ENCODE measurements at regions of chr2 and their contacts with region 1.

Region 1: DNA sequence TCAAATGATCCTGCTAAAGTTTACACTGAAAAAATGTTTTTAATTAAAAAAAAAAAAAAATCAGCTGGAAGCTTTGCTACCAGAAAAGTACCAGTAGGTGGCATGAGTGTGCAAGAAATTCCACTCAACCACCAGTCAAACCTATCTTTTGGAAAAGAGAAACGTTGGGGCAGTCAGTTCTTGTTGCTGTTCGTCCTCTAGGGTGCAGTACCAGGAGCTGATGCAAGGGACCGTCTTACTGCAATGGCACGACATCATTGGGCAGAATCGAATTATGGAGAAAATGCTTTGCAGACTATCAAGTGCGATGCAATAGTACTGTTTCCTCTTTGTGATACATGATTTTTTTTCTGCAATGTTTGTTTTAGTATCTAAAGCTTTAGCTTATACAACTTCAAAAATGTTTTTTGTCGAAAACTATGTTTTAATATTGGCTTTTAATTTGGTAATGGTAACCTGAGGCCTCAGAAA is 18.3 kb downstream of the YPEL5 start:
- DNase-seq: peak; percentile 76
- H3K4me3 ChIP-seq: no peak overlapping the region
- CTCF ChIP-seq: peak; percentile 76

Region 2: DNA sequence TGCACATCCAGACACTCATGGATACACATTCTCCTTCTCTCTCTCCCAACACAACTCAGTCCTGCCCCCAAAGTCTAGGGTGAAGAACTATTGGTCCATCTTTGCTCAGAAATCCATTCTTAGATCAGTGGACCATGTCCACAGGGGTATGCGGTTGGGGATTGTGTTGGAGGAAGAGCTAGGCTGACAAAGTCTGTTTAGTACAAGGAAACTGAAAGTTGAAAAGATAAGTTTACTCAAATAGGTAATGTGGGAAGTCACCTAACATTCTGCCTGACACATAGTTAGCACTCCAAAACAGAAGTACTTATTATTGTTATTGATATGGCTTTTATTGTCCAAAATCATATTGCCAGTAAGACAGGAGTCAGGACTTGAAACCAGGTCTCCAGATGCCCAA is 299.6 kb before region 1 on chr2:
- CTCF ChIA-PET with region 1: no interaction called
- POLR2A ChIA-PET with region 1: no interaction called
- DNase-seq: no peak
- H3K4me3 ChIP-seq: no peak overlapping the region
- CTCF ChIP-seq: no peak

Region 3: GRCh38 chr2:30089171-30089570 is 75.9 kb before region 1 on chr2:
- CTCF ChIA-PET with region 1: interaction called, 14 read pairs
- POLR2A ChIA-PET with region 1: no interaction called
- DNase-seq: no peak
- H3K4me3 ChIP-seq: no peak overlapping the region
- CTCF ChIP-seq: no peak

Region 4: DNA sequence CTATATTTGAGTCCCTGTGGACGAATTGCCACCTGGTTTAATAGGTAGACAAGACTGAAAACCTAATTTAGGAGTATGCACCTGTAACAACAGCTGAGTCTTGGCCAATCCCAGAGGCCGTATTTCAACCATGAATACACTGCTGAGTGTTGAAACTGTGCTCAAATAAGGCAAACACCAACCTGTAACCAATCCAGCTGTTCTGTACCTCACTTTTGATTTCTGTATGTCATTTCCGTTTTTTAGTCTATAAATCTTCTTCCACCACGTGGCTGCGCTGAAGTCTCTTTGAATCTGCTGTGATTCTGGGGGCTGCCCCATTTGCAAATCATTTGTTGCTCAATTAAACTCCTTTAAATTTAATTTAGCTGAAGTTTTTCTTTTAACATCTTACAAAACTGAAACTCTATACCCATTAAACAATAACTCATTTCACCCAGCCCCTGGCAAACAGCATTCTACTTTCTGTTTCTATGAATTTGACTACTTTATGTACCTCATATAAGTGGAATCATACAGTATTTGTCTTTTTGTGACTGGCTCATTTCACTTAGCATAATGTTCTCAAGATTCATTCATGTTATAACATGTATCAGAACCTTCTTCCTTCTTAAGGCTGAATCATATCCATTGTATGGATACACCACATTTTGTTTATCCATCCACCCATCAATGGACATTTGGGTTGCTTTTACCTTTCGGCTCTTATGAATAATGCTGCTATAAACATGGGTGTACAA is 25.8 kb before region 1 on chr2:
- CTCF ChIA-PET with region 1: no interaction called
- POLR2A ChIA-PET with region 1: no interaction called
- DNase-seq: no peak
- H3K4me3 ChIP-seq: no peak overlapping the region
- CTCF ChIP-seq: no peak

Region 5: GRCh38 chr2:30185186-30185585 is 20.1 kb after region 1 on chr2:
- CTCF ChIA-PET with region 1: interaction called, 46 read pairs
- POLR2A ChIA-PET with region 1: no interaction called
- DNase-seq: peak; percentile 17
- H3K4me3 ChIP-seq: no peak overlapping the region
- CTCF ChIP-seq: no peak

Region 6: GRCh38 chr2:30208452-30208851 is 43.4 kb after region 1 on chr2:
- CTCF ChIA-PET with region 1: interaction called, 51 read pairs
- POLR2A ChIA-PET with region 1: no interaction called
- DNase-seq: peak; percentile 53
- H3K4me3 ChIP-seq: no peak overlapping the region
- CTCF ChIP-seq: peak; percentile 81

Region 7: DNA sequence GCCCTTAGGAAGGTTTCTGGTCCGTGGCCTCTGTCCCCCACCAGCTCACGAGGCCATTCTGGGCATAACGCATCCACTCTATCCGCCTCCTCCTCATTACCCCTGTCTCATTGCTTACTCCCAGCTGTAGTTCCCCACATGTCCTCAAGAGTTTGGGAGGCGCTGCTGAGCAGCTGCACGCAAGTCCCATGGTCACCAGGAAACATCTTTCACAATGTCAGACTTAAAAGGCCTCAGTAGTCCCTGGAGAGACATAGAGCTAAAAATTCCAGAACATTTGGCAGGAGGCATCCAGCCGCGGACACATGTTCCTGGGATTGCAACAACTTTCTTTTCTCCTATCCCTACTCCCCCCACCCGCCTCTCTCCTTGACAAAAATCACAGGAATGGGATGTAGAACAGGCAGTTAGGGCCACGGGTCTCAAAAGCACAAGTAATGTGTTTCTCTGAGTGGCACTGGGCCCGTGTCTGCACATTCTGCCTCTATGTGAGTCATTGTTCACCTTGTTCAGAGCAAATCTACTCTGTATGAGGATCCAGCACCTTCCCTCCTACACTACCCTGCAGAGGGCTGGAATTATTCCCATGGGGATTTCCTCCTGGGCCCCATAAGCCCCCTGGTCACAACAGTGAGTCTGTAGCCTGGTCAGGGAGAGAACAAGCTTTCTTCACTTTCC is 74.4 kb after region 1 on chr2:
- CTCF ChIA-PET with region 1: interaction called, 12 read pairs
- POLR2A ChIA-PET with region 1: no interaction called
- DNase-seq: peak; percentile 45
- H3K4me3 ChIP-seq: no peak overlapping the region
- CTCF ChIP-seq: peak; percentile 97

Region 8: GRCh38 chr2:30398084-30398873 is 233.2 kb after region 1 on chr2:
- CTCF ChIA-PET with region 1: no interaction called
- POLR2A ChIA-PET with region 1: no interaction called
- DNase-seq: no peak
- H3K4me3 ChIP-seq: no peak overlapping the region
- CTCF ChIP-seq: no peak

Region 9: GRCh38 chr2:31333527-31334183 is 1168.6 kb after region 1 on chr2:
- CTCF ChIA-PET with region 1: interaction called, 15 read pairs
- POLR2A ChIA-PET with region 1: no interaction called
- DNase-seq: no peak
- H3K4me3 ChIP-seq: no peak overlapping the region
- CTCF ChIP-seq: peak; percentile 82